IMR-90 (cell line): ENCODE measurements at regions of chr19 and their contacts with region 1.

Region 1: GRCh38 chr19:13794757-13795589 is at the start of gene ZSWIM4:
- DNase-seq: peak; percentile 99
- ATAC-seq: peak; percentile 89
- H3K4me3 ChIP-seq: peak within 1 kb of the TSS; percentile 86
- H3K27ac ChIP-seq: peak within 1 kb of the TSS; percentile 95
- H3K4me1 ChIP-seq: peaks cover 7% of the 10 kb centered on the region
- H3K27me3 ChIP-seq: no peaks in the 10 kb centered on the region
- CTCF ChIP-seq: no peak
- POLR2A ChIP-seq: peak; percentile 78
- RAD21 ChIP-seq: no peak
- total RNA-seq, gene ZSWIM4: 1.9 and 2.2 TPM in 2 replicates

Region 2: DNA sequence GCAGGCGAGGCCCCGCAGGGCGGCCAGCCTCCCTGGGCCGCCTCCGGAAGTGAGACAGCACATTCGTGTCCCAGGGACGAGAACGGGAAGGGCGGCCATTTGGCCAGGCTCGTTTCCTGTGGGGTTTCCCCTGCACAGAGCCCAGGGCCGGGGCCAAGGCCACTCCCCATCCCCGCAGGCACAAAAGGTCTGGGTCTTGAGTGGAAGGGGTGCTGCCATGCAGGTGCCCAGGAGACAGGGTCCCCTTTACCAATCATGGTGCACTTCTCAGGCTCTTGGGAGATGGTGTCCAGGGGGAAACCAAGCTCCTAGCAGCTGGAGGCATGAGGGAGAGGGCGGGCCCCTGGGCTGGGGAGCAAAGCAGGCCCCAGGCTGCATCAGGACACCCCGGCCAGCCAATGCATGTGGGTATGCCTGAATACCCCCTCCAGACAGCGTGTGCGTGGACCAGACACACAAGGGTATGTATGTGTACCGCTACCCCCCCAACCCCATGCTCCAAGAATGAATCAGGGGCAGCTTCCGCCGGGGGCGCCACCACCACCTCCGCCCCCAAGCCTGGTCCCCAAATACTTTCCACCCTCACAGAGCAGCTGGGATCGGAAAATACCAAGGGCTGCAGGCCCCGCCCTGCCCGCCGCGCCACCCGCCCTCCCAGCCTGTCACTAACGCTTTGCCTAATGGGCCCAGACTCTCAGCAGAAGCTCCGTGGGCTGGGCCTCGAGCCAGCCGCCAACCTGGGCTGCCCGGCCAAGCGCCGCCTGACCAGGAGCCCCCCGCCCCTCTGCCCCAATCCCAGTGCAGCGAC is 44.4 kb after region 1 on chr19:
- CTCF ChIA-PET with region 1: no interaction called
- POLR2A ChIA-PET with region 1: interaction called, 14 read pairs
- dilution Hi-C with region 1: no loop called
- in situ Hi-C with region 1: no loop called
- intact Hi-C with region 1: loop called (anchors 5 kb)
- DNase-seq: peak; percentile 84
- ATAC-seq: peak; percentile 42
- H3K4me3 ChIP-seq: peak overlapping the region; percentile 95
- H3K27ac ChIP-seq: peak overlapping the region; percentile 97
- H3K4me1 ChIP-seq: peaks cover 36% of the 10 kb centered on the region
- H3K27me3 ChIP-seq: no peaks in the 10 kb centered on the region
- CTCF ChIP-seq: 0 out of 2 replicates have a peak, but pooled peaks have one; percentile 8
- POLR2A ChIP-seq: peak; percentile 90
- RAD21 ChIP-seq: no peak